ENCODE measurements at regions of chr7 and their contacts with region 1.

Region 1: GRCh38 chr7:74569501-74570075 is 87.9 kb upstream of the GTF2I start:
- DNase-seq: no peak
- H3K4me3 Mint-ChIP-seq: no peak overlapping the region
- H3K27ac Mint-ChIP-seq: no peak overlapping the region
- H3K4me1 Mint-ChIP-seq: no peaks in the 10 kb centered on the region
- H3K27me3 Mint-ChIP-seq: no peaks in the 10 kb centered on the region
- CTCF ChIP-seq: no peak

Region 2: GRCh38 chr7:74417419-74417971 is 152.1 kb before region 1 on chr7:
- CTCF ChIA-PET with region 1: interaction called, 24 read pairs
- POLR2A ChIA-PET with region 1: no interaction called
- intact Hi-C with region 1: loop called (anchors 1 kb)
- DNase-seq: peak; percentile 82
- H3K4me3 Mint-ChIP-seq: no peak overlapping the region
- H3K27ac Mint-ChIP-seq: no peak overlapping the region
- H3K4me1 Mint-ChIP-seq: peaks cover 6% of the 10 kb centered on the region
- H3K27me3 Mint-ChIP-seq: no peaks in the 10 kb centered on the region
- CTCF ChIP-seq: peak; percentile 96

Region 3: GRCh38 chr7:74441801-74442200 is 127.8 kb before region 1 on chr7:
- CTCF ChIA-PET with region 1: interaction called, 11 read pairs
- POLR2A ChIA-PET with region 1: no interaction called
- intact Hi-C with region 1: no loop called
- DNase-seq: no peak
- H3K4me3 Mint-ChIP-seq: no peak overlapping the region
- H3K27ac Mint-ChIP-seq: no peak overlapping the region
- H3K4me1 Mint-ChIP-seq: no peaks in the 10 kb centered on the region
- H3K27me3 Mint-ChIP-seq: no peaks in the 10 kb centered on the region
- CTCF ChIP-seq: no peak

Region 4: DNA sequence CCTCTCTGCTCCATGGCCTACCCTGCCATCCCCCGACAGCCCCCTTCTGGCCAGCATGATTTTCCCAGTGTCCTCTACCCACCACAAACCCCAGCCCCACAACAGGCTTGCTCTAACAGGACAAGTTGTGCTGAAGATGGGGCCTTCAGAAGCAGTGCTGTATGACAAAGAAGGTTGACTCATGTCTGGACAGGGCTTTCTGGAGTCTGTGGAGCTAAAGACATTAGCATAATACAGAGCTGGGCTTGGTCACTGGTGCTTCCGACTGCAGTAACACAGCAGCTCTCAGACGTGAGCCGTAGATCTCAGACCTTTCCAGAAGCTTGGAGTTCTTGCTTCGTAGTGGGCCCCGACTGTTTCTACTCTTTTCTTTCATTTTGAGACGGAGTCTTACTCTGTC is 15.4 kb before region 1 on chr7:
- CTCF ChIA-PET with region 1: interaction called, 14 read pairs
- POLR2A ChIA-PET with region 1: interaction called, 3 read pairs
- intact Hi-C with region 1: no loop called
- DNase-seq: no peak
- H3K4me3 Mint-ChIP-seq: no peak overlapping the region
- H3K27ac Mint-ChIP-seq: no peak overlapping the region
- H3K4me1 Mint-ChIP-seq: no peaks in the 10 kb centered on the region
- H3K27me3 Mint-ChIP-seq: no peaks in the 10 kb centered on the region
- CTCF ChIP-seq: no peak

Region 5: DNA sequence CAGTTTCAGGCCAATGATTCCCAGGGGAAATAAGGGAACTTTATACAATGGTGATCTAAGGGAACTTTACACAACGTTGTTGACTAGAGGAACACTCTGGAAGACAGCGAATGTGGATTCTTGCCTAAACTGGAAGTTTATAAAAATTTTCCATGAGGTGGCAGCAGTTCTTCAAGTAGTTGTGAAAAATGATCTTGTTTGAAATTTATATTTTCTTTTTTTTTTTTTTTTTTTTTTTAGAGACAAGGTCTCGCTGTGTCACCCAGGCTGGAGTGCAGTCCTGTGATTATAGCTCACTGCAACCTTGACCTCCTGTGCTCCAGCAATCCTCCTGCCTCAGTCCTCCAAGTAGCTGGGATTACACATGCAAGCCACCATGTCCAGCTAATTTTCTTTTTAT is 55.9 kb after region 1 on chr7:
- CTCF ChIA-PET with region 1: no interaction called
- POLR2A ChIA-PET with region 1: no interaction called
- intact Hi-C with region 1: no loop called
- DNase-seq: peak; percentile 42
- H3K4me3 Mint-ChIP-seq: no peak overlapping the region
- H3K27ac Mint-ChIP-seq: no peak overlapping the region
- H3K4me1 Mint-ChIP-seq: no peaks in the 10 kb centered on the region
- H3K27me3 Mint-ChIP-seq: no peaks in the 10 kb centered on the region
- CTCF ChIP-seq: no peak